Activated CD8-positive, alpha-beta T cell treated with anti-CD3 and anti-CD28 coated beads, Interleukin-2, amount 10 ng/mL, durations not matched to agents 7 days and 5 days (primary cell): ENCODE measurements at regions of chr1 and their contacts with region 1.

Region 1: GRCh38 chr1:9110669-9111356 is 18.1 kb downstream of the GPR157 start:
- DNase-seq: peak; percentile 90
- ATAC-seq: peak; percentile 82
- H3K4me3 Mint-ChIP-seq: no peak overlapping the region
- H3K27ac Mint-ChIP-seq: no peak overlapping the region
- H3K4me1 Mint-ChIP-seq: peaks cover 16% of the 10 kb centered on the region
- H3K27me3 Mint-ChIP-seq: no peaks in the 10 kb centered on the region

Region 2: DNA sequence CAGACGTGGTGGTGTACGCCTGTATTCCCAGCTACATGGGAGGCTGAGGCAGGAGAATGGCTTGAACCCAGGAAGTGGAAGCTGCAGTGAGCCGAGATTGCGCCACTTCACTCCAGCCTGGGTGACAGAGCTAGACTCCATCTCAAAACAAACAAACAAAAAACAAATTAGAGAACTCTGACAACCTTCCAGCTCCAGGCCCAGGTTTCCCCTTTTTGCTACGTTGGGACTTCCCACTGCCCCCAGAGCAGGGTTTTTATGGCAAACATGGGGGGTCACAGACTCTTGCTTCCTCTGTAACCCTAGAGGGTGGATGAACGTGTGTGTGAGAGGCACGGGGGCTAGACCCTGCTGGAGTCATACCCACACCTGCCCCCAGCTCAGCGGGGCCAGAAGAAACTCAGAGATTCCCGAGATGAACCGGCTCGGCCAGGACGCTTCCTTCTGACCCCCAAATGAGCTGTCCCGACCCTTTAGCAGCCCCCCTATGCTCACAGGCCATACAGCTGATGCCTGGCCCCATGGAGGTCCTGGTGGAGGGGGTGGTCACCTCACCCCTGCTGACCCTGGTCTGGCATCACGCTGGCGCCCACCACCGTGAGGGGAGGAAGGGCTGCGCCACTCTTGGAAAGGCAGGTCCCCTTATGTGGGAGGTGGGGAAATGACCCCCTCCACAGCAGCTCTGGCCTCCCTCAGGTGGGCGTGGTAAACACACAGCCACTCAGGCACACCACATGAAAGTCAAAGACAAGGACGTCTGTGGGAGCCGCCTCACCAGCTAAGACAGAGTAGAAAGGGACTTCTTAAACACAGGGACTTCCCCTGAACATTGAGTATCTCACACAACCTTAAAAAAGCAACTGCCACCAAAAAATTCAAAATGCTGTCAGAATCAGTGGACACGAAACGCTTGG is 10.9 kb after region 1 on chr1:
- CTCF ChIA-PET with region 1: interaction called, 22 read pairs
- POLR2A ChIA-PET with region 1: no interaction called
- DNase-seq: peak; percentile 68
- ATAC-seq: peak; percentile 89
- H3K4me3 Mint-ChIP-seq: peak overlapping the region; percentile 38
- H3K27ac Mint-ChIP-seq: peak overlapping the region; percentile 55
- H3K4me1 Mint-ChIP-seq: peaks cover 32% of the 10 kb centered on the region
- H3K27me3 Mint-ChIP-seq: peaks cover 2% of the 10 kb centered on the region

Region 3: DNA sequence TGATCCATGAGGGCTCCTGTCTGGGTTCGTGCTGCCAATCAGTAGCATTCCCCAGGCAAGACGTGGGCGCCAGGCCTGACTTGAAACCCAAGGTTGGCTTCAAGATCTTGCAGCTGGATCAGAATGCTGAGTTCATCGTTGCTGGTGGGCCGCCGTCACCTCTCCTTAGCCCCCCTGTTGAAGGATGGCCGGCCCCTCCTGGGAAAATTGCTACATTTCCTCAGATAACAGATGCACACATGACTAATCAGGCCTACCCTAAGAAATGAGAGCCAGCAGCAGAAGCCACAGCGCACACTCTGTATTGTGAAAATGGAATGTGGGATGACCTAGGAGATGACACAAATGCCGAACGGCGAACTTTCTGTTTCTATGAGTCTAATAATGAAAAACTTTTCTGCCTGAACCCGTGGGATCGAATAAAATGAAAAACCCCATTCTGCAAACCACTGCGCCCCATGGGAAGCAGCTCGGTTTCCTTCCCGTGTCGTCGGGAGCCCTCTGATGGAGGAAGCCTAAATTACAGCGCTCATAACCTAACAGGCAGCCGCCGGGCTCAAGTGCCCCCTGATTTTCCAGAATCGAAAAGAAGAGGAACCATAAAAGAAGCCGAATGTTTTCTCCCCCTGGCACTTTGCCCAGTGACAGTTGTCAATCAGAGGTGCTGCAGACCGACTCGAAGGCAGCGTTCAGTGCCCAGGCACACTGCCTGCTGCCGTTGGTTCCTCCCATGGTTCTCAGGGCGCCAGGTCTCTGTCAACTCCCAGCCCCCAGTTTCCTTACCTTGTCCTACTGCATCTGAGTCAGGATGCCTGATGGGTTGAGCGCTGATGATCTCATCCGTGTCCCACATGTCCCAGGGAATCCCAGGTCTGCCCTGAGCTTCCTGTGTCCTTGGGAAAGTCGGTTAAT is 85.6 kb after region 1 on chr1:
- CTCF ChIA-PET with region 1: interaction called, 44 read pairs
- POLR2A ChIA-PET with region 1: no interaction called
- DNase-seq: peak; percentile 69
- ATAC-seq: peak; percentile 45
- H3K4me3 Mint-ChIP-seq: no peak overlapping the region
- H3K27ac Mint-ChIP-seq: no peak overlapping the region
- H3K4me1 Mint-ChIP-seq: peaks cover 11% of the 10 kb centered on the region
- H3K27me3 Mint-ChIP-seq: peaks cover 52% of the 10 kb centered on the region

Region 4: GRCh38 chr1:9201401-9202239 is 90.8 kb after region 1 on chr1:
- CTCF ChIA-PET with region 1: interaction called, 44 read pairs
- POLR2A ChIA-PET with region 1: no interaction called
- DNase-seq: peak; percentile 42
- ATAC-seq: no peak
- H3K4me3 Mint-ChIP-seq: peak overlapping the region; percentile 25
- H3K27ac Mint-ChIP-seq: no peak overlapping the region
- H3K4me1 Mint-ChIP-seq: peaks cover 35% of the 10 kb centered on the region
- H3K27me3 Mint-ChIP-seq: peaks cover 82% of the 10 kb centered on the region